Cardiac septum (tissue), 1 donor: ENCODE measurements at regions of chrX and their contacts with region 1.

Region 1: GRCh38 chrX:19593690-19594089 is 78.4 kb upstream of the MAP3K15 start:
- DNase-seq: no peak

Region 2: DNA sequence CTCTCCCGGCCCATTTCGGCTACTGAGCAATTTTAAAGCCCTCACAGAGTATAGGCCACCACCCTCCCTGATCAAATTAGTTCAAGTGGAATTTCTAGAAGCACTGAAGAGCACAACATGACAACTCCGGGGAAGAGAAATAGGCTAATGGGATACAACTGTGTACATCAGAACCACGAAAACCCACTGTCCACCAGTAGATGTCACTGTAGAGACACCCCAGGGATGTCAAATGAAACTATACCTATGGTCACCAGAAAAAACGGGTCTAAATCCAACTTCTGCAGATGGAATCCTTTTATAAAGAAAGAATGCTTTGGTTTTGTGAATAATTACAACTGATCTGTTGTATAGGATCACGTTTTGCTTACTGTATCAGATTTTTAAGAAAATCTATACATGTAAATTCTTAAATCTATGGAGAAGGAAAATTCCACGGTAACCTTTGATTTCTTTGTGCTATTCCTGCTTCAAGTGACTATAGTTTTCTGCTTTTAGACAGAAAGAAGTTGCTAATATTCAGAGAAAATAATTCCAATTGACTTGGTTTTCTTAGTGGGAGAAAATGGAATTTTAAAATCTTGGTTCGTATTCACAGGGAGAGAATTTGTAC is 48.9 kb before region 1 on chrX:
- intact Hi-C with region 1: loop called (anchors 5 kb)
- DNase-seq: no peak

Region 3: GRCh38 chrX:19660604-19661255 is 67.0 kb after region 1 on chrX:
- intact Hi-C with region 1: no loop called
- DNase-seq: no peak

Region 4: DNA sequence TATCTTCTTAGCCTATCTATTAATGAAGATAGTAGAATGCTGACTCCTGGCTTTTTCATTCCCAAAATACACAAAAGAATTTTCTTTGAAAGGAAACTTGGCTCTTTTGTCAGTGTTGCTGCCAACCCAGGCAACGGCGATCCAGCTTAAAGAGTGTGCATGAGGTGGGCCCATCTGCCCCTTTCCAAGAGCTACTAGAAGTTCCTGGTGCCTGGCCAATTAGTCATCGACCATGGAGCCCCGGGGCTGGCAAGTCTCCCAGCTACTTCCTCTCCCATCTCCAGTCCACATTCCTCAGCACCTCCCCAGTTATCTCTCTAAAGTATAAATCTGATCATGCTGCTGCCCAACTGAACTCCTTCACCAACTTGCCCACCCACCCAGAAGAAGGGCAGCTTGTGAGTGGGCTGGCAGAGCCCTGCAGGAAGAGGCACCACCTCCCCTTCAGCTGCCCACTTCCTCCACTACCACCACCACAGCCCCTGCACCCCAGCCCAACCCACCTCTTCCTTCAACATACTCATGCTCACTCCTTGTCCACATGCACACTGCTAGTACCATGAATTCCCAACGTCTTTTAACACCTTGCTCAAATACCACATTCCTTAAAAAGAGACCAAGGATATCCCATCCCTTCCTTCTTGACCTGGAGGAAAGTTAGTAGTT is 79.8 kb after region 1 on chrX:
- intact Hi-C with region 1: loop called (anchors 10 kb)
- DNase-seq: peak; percentile 79

Region 5: GRCh38 chrX:19739683-19740082 is 146.0 kb after region 1 on chrX:
- intact Hi-C with region 1: loop called (anchors 5 kb)
- DNase-seq: no peak

Region 6: GRCh38 chrX:19887911-19888879 is 294.5 kb after region 1 on chrX:
- intact Hi-C with region 1: loop called (anchors 2 kb)
- DNase-seq: no peak